Heart left ventricle (tissue), 16 donors: ENCODE measurements at regions of chr3 and their contacts with region 1.

Region 1: DNA sequence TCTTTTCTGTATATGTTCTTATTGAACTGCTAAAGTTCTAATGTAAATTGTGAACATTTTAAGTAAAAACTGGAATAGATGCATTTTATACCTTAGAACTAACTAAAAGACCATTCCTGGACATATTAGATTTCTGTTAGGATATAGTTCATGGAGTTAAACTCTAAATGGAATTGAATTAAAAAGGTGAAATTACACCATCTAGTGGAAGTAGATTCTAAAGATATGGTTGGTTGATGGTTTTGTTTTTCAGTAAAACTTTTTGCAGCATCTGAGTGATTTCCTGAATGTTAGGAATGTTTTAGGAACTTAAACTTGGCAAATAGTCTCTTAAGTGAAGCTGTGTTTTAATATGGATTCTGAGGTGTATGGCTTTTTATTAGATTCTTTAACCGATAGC is 96.8 kb downstream of the SLMAP start:
- DNase-seq: no peak
- ATAC-seq: no peak
- H3K4me3 ChIP-seq: no peak overlapping the region
- H3K27ac ChIP-seq: no peak overlapping the region
- H3K4me1 ChIP-seq: no peaks in the 10 kb centered on the region
- H3K27me3 ChIP-seq: no peaks in the 10 kb centered on the region
- CTCF ChIP-seq: peak in 8 of 12 donors; percentile 11 to 32 (median 15)
- POLR2A ChIP-seq: no peak

Region 2: GRCh38 chr3:57169872-57170623 is 682.8 kb before region 1 on chr3:
- intact Hi-C with region 1: loop called in 1 of 10 experiments (anchors 10 kb)
- DNase-seq: peak; percentile 74 to 88 (median 79)
- ATAC-seq: peak; percentile 62 to 89 (median 80)
- H3K4me3 ChIP-seq: peak overlapping the region; percentile 1 to 64 (median 55)
- H3K27ac ChIP-seq: peak overlapping the region in 5 of 12 donors; percentile 18 to 55 (median 31)
- H3K4me1 ChIP-seq: peaks cover 0 to 17% (median 5%) of the 10 kb centered on the region in 12 donors
- H3K27me3 ChIP-seq: peaks cover 0 to 10% (median 0%) of the 10 kb centered on the region in 9 donors
- CTCF ChIP-seq: peak; percentile 78 to 94 (median 85)
- POLR2A ChIP-seq: no peak

Region 3: GRCh38 chr3:57397175-57398026 is 455.5 kb before region 1 on chr3:
- intact Hi-C with region 1: loop called in 1 of 10 experiments (anchors 10 kb)
- DNase-seq: peak in 3 of 5 donors; percentile 18 to 29 (median 23)
- ATAC-seq: peak in 3 of 4 donors; percentile 66 to 85 (median 75)
- H3K4me3 ChIP-seq: no peak overlapping the region
- H3K27ac ChIP-seq: no peak overlapping the region
- H3K4me1 ChIP-seq: peaks cover 0 to 4% (median 0%) of the 10 kb centered on the region in 12 donors
- H3K27me3 ChIP-seq: no peaks in the 10 kb centered on the region
- CTCF ChIP-seq: peak; percentile 58 to 79 (median 73)
- POLR2A ChIP-seq: no peak

Region 4: DNA sequence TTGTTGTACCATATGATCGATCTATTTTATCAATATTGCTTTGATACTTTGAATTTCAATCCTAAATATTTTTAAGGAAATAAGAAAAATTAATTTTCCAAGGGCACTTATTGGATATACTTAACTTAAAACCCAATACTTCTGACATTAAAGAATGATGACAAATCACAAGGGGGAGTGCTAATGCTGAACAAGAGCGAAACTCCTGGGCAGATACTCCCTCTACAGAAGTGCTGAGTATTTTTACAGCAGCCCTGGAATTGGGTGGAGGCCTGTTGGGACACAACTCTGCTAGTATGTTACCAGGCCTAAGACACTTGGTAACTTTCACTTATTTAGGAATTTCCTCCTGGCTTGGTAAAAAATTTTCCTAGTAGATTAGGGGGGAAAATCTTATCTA is 206.2 kb before region 1 on chr3:
- intact Hi-C with region 1: loop called in 6 of 10 experiments (anchors 5 to 10 kb)
- DNase-seq: peak in 2 of 5 donors; percentile 22 to 35
- ATAC-seq: peak; percentile 86 to 92 (median 89)
- H3K4me3 ChIP-seq: no peak overlapping the region
- H3K27ac ChIP-seq: peak overlapping the region in 2 of 12 donors; percentile 25 to 34
- H3K4me1 ChIP-seq: peaks cover 0 to 12% (median 6%) of the 10 kb centered on the region in 12 donors
- H3K27me3 ChIP-seq: no peaks in the 10 kb centered on the region
- CTCF ChIP-seq: peak in 8 of 12 donors; percentile 24 to 60 (median 41)
- POLR2A ChIP-seq: no peak

Region 5: GRCh38 chr3:57659806-57660439 is 193.0 kb before region 1 on chr3:
- intact Hi-C with region 1: loop called in 1 of 10 experiments (anchors 10 kb)
- DNase-seq: no peak
- ATAC-seq: no peak
- H3K4me3 ChIP-seq: no peak overlapping the region
- H3K27ac ChIP-seq: peak overlapping the region in 7 of 12 donors; percentile 25 to 63 (median 46)
- H3K4me1 ChIP-seq: peaks cover 0 to 19% (median 15%) of the 10 kb centered on the region in 12 donors
- H3K27me3 ChIP-seq: no peaks in the 10 kb centered on the region
- CTCF ChIP-seq: no peak
- POLR2A ChIP-seq: no peak